ENCODE measurements at regions of chr5 and their contacts with region 1.

Region 1: DNA sequence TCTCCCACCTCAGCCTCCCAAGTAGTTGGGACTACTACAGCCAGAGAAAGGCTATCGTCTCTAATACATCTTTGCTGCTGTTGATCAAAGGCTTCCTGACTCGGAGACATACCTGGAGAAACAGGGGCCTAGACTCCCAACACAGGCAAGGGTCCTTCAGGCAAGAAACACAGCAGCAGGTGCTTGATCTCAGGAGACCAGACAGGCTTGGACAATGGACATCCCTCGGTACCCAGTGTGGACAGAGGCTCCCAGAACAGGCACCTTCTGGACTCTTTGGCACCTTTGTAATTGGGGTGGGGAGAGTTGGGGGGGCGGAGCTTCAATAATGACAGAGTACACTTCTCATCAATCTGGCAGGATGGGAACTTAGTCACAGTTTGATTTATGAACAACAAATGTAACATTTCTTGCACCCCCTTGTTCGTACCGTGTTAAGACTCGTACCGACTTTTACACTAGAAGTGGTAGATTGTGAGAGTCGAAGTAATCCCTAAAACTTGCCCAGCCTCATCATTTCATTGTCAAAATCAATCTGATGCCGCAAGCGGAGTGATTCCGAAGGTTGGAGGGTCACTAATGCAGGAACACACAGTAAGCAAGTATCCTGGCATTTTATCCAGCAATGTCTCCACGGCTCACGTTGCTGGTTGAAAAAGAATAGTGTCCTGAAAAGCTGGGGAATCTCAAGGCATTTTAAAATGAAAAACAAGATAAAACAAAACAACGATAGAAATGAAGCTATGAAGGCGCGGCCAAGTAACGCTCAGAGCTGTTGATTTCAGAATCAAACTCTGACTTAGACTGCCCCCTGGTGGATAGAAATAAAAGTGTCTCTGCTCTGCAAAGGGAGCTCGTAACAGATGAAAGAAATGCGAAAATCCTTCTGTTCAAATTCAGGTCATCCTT is 46.4 kb upstream of the STK32A start:
- DNase-seq: no peak

Region 2: DNA sequence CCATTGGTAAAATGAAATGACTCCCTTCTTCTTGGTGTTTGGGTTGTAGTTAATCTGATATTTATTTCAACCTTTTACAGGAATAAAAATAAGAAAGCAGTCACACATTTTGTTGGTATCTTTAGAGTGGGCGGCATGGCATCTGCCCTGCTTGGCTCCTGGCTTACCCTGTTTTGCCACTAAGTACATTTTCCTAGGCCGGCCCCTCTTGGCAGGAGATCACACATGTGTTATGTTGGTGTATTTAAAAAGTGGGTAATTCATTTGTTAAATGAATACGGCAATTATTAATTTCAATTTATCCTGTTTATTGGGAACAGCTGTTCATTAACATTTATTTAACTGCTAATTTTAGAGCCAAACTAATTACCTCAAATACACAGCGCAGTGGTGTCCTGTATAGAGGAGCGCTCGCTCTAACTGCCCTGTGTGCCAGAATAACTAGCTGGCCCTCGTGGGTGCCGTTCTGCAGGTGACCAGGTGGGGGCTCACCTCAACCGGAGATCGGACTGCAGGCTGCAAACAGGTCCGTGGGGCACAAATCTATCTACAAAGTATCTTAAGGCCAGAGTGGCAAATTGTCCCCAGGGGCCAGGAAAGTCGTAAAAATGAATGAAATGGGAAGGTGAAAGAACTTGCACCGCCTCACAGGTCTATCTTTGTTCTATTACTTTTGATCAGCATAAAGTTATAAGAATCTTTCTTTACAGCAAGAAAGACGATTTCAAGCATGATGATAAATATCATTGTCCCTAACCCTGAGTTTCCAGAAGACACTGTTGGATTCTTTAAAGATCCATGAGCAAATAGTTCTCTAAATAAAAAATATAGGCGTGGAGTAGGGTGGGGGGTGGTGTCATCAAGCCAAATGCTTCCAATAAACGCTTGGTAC is 646.2 kb before region 1 on chr5:
- intact Hi-C with region 1: loop called (anchors 5 kb)
- DNase-seq: no peak

Region 3: DNA sequence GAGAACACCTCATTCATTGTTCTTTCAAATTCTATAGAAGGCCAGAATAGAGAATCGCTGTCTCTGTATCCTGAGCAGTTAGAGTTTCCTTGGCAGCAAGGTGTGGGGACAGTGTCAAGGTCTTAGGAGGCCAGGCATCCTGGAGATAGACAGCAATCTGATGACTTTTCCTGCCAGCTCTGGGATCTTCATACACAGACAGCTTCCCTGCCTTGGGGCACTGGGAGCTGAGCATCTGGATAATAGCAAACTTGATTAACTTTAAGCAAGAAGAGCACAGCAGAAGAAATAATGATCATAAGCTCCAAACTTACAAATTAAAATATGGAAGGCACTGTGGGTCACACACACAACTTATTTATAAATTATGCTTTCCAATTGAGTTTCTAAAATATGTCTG is 39.7 kb before region 1 on chr5:
- intact Hi-C with region 1: no loop called
- DNase-seq: no peak

Region 4: DNA sequence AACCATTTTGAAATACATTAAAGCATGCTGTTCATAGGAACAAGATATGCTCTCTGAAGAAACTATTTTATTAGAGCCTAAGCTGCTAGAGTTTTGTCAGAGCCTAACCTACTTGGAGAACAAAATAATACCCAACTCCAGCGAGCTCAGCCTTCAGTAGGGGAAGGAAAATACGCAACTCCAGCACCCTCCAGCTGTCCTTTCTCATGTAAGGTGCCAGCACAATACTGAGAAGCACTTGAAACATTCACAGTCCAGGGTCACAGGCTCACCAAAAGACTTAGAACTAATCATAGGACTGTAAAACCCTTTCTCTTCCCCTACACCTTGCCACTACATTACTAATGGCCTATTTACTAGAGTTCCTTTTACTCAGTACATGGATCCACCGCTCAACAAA is 302.5 kb after region 1 on chr5:
- intact Hi-C with region 1: no loop called
- DNase-seq: no peak